ENCODE measurements at regions of chr17 and their contacts with region 1.

Region 1: DNA sequence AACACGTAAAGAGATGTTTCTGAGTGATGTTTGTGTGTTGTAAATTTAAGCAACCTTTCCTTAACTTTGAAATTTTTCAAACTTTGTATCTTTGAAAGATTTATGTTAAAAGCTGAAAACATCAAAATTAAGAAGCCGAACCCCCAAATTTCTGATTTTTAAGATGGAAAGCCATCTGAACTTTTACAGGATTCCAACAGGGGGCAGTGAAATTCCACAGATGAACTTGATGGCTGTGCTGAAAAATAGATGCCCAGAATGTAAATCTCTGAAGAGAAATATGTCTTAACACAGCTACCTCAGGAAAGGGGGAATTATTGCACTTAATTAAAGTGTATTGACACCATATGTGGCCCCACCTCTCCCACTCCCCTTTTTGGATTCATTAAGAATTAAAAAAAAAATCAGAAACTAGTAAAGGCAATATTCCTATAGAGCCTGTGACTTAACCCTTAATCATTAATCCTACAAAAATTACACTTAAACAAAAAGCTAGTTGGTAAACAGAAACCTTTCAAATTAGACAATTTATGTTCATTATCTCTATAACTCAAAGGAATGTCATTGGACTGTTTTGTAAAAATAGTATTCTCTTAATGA is 597.9 kb downstream of the KCNJ2 start:
- DNase-seq: peak; percentile 60
- H3K4me3 ChIP-seq: no peak overlapping the region; a peak in 1 of 4 replicates
- H3K27ac ChIP-seq: no peak overlapping the region
- H3K4me1 ChIP-seq: no peaks in the 10 kb centered on the region; a peak in 1 of 4 replicates
- H3K27me3 ChIP-seq: no peaks in the 10 kb centered on the region
- CTCF ChIP-seq: peak; percentile 99
- EP300 ChIP-seq: no peak
- RAD21 ChIP-seq: peak; percentile 95

Region 2: DNA sequence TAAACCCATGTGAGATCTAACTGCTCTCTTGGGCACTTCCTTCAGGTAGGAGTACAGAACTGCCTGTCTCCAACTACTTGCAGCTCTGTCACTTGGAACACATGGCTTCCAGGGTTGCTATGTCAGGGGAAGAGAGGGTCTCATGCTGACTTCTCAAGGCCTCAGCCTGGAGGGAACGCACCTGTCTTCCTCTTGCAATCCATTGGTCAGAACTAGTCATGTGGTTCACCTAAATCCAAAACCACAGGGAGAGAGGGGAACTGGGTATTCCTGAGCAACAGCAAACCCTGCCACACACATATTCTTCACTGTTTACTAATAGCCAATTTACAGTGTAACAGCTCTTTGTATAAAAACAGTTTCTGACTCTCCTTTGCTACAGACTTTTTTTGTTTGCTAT is 391.8 kb before region 1 on chr17:
- CTCF ChIA-PET with region 1: no interaction called
- POLR2A ChIA-PET with region 1: no interaction called
- DNase-seq: no peak
- H3K4me3 ChIP-seq: no peak overlapping the region
- H3K27ac ChIP-seq: no peak overlapping the region; a peak in 1 of 4 replicates
- H3K4me1 ChIP-seq: peaks cover 0 to 20% of the 10 kb centered on the region in 2 experiments; a peak in 2 of 4 replicates
- H3K27me3 ChIP-seq: no peaks in the 10 kb centered on the region
- CTCF ChIP-seq: no peak
- EP300 ChIP-seq: no peak
- RAD21 ChIP-seq: no peak

Region 3: GRCh38 chr17:70644096-70644495 is 123.1 kb before region 1 on chr17:
- CTCF ChIA-PET with region 1: interaction called, 23 read pairs
- POLR2A ChIA-PET with region 1: no interaction called
- DNase-seq: no peak
- H3K4me3 ChIP-seq: no peak overlapping the region
- H3K27ac ChIP-seq: no peak overlapping the region
- H3K4me1 ChIP-seq: no peaks in the 10 kb centered on the region
- H3K27me3 ChIP-seq: no peaks in the 10 kb centered on the region
- CTCF ChIP-seq: no peak
- EP300 ChIP-seq: no peak
- RAD21 ChIP-seq: no peak

Region 4: GRCh38 chr17:70786081-70786480 is 18.9 kb after region 1 on chr17:
- CTCF ChIA-PET with region 1: interaction called, 68 read pairs
- POLR2A ChIA-PET with region 1: no interaction called
- DNase-seq: no peak
- H3K4me3 ChIP-seq: no peak overlapping the region
- H3K27ac ChIP-seq: no peak overlapping the region
- H3K4me1 ChIP-seq: no peaks in the 10 kb centered on the region; a peak in 1 of 4 replicates
- H3K27me3 ChIP-seq: no peaks in the 10 kb centered on the region
- CTCF ChIP-seq: no peak
- EP300 ChIP-seq: no peak
- RAD21 ChIP-seq: no peak

Region 5: GRCh38 chr17:71118039-71118438 is 350.8 kb after region 1 on chr17:
- CTCF ChIA-PET with region 1: interaction called, 17 read pairs
- POLR2A ChIA-PET with region 1: no interaction called
- DNase-seq: peak; percentile 32
- H3K4me3 ChIP-seq: no peak overlapping the region
- H3K27ac ChIP-seq: no peak overlapping the region
- H3K4me1 ChIP-seq: no peaks in the 10 kb centered on the region
- H3K27me3 ChIP-seq: no peaks in the 10 kb centered on the region
- CTCF ChIP-seq: peak; percentile 67
- EP300 ChIP-seq: no peak
- RAD21 ChIP-seq: peak; percentile 81

Region 6: DNA sequence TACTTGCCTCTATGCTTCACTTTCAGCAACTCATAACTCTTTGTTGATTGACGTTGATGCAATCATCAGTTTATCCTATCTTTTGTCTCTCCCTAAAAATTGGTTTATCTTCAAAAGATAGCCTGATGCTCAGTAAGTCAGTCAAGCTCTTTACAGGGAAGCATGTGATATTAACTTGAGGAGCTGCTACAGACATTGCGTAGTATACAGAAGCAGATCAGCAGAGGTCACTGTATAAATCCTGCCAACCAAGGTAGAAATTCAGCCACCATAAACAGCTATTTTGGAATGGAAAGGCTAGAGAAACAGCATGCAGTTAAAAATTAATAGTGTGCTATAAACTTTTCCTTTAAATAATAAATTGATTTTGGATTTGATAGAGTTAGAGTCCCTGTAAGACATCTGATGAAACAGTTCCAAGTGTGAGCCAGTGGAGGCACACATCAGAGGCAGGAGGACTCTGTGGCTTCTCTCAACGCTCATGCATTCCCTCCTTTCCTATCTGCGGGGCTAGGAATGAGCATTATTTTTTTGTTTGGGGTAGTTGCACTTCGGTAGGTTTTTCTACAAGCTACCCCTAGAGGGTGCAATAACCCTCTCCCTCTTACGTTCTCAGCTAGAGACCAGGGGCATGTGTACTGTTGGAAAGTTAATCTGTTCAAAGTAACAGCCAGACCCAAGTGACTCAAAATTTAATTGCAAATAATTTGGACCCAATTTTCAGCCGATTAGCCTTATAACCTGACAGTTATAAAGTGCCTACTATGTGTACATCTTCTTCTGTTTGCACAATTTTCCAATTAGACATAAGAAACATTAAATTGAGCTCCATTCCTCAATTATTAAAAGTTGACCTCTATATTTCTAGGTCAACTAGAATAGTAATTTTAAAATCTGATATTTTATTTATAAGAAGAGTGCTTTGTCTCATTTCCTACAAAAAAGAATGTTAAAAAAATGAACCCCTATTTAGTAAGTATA is 705.9 kb after region 1 on chr17:
- CTCF ChIA-PET with region 1: interaction called, 27 read pairs
- POLR2A ChIA-PET with region 1: interaction called, 3 read pairs
- DNase-seq: peak; percentile 65
- H3K4me3 ChIP-seq: no peak overlapping the region
- H3K27ac ChIP-seq: no peak overlapping the region
- H3K4me1 ChIP-seq: peaks cover 0 to 4% of the 10 kb centered on the region in 2 experiments; a peak in 1 of 4 replicates
- H3K27me3 ChIP-seq: no peaks in the 10 kb centered on the region
- CTCF ChIP-seq: peak; percentile 94
- EP300 ChIP-seq: 0 out of 4 replicates have a peak, but pooled peaks of 1 of the 2 experiments have one; percentile 9
- RAD21 ChIP-seq: peak; percentile 97

Measured in SK-N-SH (cell line).